ENCODE measurements at regions of chr22 and their contacts with region 1.

Region 1: DNA sequence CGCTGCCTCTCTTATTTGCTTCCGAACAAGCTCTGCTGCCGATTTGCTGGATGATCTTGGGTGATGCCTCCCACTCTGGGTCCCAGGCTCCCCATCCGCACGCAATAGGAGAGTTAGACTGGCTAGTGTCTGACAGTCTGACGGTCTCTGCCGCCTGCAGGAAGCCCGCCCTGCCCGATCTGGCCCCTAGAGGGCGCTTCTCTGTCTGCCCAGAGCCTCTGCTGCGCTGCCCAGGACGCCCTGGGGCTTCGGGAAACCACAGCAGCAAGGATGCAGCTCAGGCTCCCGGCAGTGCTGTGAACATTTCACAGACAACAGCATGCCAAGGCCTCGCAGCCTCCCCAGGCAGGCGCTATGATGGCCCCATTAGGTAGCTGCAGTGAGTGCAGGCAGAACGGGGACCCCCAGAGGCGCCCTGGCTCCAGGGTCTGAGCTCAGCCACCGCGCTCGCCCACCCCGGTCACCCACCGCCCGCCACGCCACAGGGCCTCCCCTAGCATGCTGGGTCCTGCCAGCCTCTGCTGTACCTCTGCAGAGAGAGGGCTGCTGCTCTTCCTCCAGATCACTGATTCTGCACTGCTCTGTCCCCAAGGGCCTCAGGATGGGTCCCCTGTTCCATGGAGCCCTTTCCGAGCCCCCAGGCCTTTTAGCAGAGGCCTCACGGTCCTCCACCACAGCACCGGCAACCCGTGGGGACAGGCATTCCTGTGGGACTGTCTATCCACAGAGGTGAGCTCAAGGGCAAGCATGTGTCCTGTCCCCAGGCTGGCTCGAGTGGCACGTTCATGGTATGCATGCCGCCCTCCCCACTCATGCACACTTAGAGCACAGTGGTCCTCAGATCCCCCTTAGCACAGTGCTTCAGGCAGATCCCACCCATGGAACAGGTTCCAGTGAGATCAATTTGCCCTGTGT is 4.3 kb upstream of the BAIAP2L2 start:
- DNase-seq: peak; percentile 76
- H3K4me3 Mint-ChIP-seq: no peak overlapping the region
- H3K27ac Mint-ChIP-seq: no peak overlapping the region
- H3K4me1 Mint-ChIP-seq: peaks cover 5% of the 10 kb centered on the region
- H3K27me3 Mint-ChIP-seq: no peaks in the 10 kb centered on the region
- CTCF ChIP-seq: peak; percentile 81

Region 2: GRCh38 chr22:38012604-38013072 is 102.1 kb before region 1 on chr22:
- CTCF ChIA-PET with region 1: no interaction called
- POLR2A ChIA-PET with region 1: no interaction called
- intact Hi-C with region 1: no loop called
- DNase-seq: no peak
- H3K4me3 Mint-ChIP-seq: no peak overlapping the region
- H3K27ac Mint-ChIP-seq: no peak overlapping the region
- H3K4me1 Mint-ChIP-seq: peaks cover 8% of the 10 kb centered on the region
- H3K27me3 Mint-ChIP-seq: no peaks in the 10 kb centered on the region
- CTCF ChIP-seq: no peak

Region 3: GRCh38 chr22:38097557-38098409 is 17.0 kb before region 1 on chr22:
- CTCF ChIA-PET with region 1: interaction called, 32 read pairs
- POLR2A ChIA-PET with region 1: interaction called, 3 read pairs
- intact Hi-C with region 1: no loop called
- DNase-seq: no peak
- H3K4me3 Mint-ChIP-seq: no peak overlapping the region
- H3K27ac Mint-ChIP-seq: peak overlapping the region; percentile 49
- H3K4me1 Mint-ChIP-seq: no peaks in the 10 kb centered on the region
- H3K27me3 Mint-ChIP-seq: no peaks in the 10 kb centered on the region
- CTCF ChIP-seq: no peak

Region 4: DNA sequence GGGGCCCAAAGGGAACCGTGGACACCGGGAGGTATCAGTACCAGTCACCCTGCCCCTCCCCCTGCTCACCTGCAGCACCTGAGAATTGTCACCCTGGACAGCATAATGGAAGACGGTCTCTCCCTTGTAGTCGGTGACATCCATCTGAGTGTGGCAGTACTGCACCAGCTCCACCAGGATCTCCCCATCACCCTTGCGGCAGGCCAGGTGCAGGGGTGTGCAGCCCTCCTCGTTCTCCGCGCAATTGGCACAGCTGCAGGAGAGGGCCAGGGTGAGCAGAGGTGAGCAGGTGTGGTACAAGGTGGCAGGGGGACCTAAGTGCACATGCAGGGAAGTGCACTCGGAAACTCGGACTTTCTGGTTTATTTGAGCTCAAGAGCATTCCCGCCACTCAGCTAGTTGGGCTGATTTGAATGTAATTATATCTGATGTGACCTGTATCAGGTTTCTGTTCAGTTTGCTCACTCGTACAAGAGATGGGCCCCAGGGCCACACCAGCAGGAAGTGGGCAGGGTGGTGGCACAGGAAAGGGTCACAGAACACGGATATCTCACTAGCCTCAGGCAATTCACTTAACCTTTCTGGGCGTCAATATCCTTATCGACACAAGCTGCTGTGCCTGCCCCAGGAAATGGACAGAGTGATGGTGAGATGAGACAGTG is 28.4 kb after region 1 on chr22:
- CTCF ChIA-PET with region 1: interaction called, 13 read pairs
- POLR2A ChIA-PET with region 1: no interaction called
- intact Hi-C with region 1: no loop called
- DNase-seq: no peak
- H3K4me3 Mint-ChIP-seq: no peak overlapping the region
- H3K27ac Mint-ChIP-seq: no peak overlapping the region
- H3K4me1 Mint-ChIP-seq: peaks cover 17% of the 10 kb centered on the region
- H3K27me3 Mint-ChIP-seq: no peaks in the 10 kb centered on the region
- CTCF ChIP-seq: no peak

Region 5: DNA sequence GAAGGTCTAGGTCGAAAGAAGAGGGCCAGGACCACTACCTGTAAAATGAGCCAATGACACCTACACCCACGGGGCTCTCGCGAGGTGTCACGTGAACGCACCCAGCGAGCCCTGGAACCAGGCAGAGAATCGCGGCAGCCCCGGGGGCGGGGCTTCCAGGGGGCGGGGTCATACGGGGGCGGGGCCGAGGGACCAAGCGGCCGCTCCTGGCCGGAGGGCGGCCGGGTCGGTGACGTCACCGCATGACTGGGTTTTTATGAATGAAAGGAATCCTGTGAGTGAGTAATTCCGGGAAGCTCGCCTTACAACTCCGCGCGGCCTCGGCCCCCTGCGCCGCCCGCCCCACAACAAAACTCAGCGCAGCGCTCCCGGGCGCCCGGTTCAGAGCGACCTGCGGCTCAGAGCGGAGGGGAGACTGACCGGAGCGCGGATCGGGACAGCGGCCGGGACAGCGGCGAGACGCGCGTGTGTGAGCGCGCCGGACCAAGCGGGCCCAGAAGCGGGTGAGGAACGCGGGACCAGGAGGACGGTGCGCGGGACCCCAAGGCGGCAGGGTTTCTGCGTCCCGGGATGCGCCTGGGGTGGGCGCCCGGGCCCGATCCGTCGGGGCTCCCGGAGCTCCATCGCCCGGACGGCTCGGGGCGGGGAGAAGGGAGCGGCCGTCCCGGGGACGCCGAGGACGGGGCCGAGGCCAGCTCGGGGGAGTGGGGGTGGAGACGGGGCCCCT is 87.1 kb after region 1 on chr22 and contains the start of gene MAFF:
- CTCF ChIA-PET with region 1: interaction called, 6 read pairs
- POLR2A ChIA-PET with region 1: interaction called, 3 read pairs
- intact Hi-C with region 1: loop called (anchors 2 kb)
- DNase-seq: peak; percentile 96
- H3K4me3 Mint-ChIP-seq: peak within 1 kb of the TSS; percentile 85
- H3K27ac Mint-ChIP-seq: peak within 1 kb of the TSS; percentile 80
- H3K4me1 Mint-ChIP-seq: peaks cover 23% of the 10 kb centered on the region
- H3K27me3 Mint-ChIP-seq: no peaks in the 10 kb centered on the region
- CTCF ChIP-seq: no peak
- total RNA-seq, gene MAFF: 54.7 and 71.4 TPM in 2 replicates

Region 6: GRCh38 chr22:38353142-38353629 is 238.4 kb after region 1 on chr22:
- CTCF ChIA-PET with region 1: no interaction called
- POLR2A ChIA-PET with region 1: no interaction called
- intact Hi-C with region 1: loop called (anchors 5 kb)
- DNase-seq: peak; percentile 65
- H3K4me3 Mint-ChIP-seq: no peak overlapping the region
- H3K27ac Mint-ChIP-seq: peak overlapping the region; percentile 64
- H3K4me1 Mint-ChIP-seq: peaks cover 9% of the 10 kb centered on the region
- H3K27me3 Mint-ChIP-seq: no peaks in the 10 kb centered on the region
- CTCF ChIP-seq: peak; percentile 97